ENCODE measurements at regions of chr20 and their contacts with region 1.

Region 1: DNA sequence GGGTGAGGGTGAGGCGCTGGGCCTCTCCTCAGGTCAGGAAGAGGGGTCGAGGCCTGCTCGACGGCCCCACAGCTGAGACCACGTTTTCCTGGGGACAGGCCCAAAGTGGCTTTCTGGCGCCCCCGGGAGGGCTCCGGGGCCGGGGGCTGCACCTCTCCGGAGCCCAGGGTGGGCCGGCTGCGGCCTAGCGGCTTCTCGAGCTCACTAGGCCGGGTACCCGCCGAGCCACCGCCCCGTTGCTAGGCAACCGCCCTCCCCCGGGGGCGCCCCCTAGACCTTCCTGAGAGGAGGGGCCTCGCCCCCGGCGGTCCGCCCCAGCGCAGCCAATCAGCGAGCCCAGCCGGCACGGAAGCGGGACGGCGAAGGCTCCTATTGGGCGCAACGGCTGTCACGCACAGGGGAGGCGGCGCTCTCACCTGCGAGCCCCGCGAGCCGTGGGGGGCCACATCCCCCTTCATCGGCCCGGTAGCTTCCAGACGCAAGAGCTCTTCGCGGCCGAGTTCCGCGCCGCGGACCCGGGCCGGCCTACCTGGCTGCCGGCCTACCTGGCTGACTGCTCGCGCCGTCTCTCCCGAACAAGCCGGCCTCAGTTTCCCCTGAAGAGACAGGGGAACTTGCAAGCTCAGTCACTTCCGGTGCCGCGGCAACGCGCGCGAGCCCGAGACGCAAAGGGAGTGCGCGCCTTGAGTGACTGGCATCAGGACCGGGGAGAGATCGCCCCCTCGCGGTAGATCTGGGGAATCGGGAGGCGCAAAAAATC is 831 bp upstream of the BCL2L1 start:
- H3K4me3 Mint-ChIP-seq: peak overlapping the region; percentile 93
- H3K27ac Mint-ChIP-seq: peak overlapping the region; percentile 97
- H3K4me1 Mint-ChIP-seq: peaks cover 47% of the 10 kb centered on the region
- H3K27me3 Mint-ChIP-seq: no peaks in the 10 kb centered on the region

Region 2: DNA sequence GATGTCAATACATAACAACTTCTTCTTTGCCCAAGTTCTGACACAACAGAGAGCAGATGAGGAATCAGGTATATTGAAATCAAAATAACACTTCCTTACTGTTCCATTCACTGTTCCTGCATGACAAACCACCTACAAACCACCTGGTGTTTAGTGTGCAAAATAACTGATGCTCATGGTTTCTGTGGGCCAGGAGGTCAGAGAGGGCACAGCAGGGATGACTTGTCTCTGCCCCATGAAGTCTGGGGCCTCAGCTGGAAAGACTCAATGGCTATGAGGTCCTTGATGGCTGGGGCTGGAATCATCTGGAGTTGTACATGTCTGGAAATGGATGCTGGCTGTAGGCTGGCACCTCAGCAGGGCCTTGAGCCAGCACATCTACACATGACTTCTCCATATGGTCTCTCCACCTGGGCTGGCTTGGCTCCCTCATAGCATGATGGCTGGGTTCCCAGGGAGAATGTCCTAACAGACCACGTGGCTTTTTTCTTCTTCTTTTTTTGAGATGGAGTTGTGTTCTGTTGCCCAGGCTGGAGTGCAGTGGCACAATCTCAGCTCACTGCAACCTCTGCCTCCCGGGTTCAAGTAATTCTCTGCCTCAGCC is 93.2 kb before region 1 on chr20:
- intact Hi-C with region 1: loop called (anchors 1 kb)
- H3K4me3 Mint-ChIP-seq: no peak overlapping the region
- H3K27ac Mint-ChIP-seq: no peak overlapping the region
- H3K4me1 Mint-ChIP-seq: no peaks in the 10 kb centered on the region
- H3K27me3 Mint-ChIP-seq: no peaks in the 10 kb centered on the region

Region 3: GRCh38 chr20:31661625-31662371 is 61.7 kb before region 1 on chr20:
- intact Hi-C with region 1: loop called (anchors 1 kb)
- H3K4me3 Mint-ChIP-seq: peak overlapping the region; percentile 74
- H3K27ac Mint-ChIP-seq: peak overlapping the region; percentile 65
- H3K4me1 Mint-ChIP-seq: peaks cover 40% of the 10 kb centered on the region
- H3K27me3 Mint-ChIP-seq: peaks cover 1% of the 10 kb centered on the region

Region 4: GRCh38 chr20:31674895-31675827 is 48.3 kb before region 1 on chr20:
- intact Hi-C with region 1: loop called (anchors 1 kb)
- H3K4me3 Mint-ChIP-seq: peak overlapping the region; percentile 72
- H3K27ac Mint-ChIP-seq: peak overlapping the region; percentile 93
- H3K4me1 Mint-ChIP-seq: peaks cover 75% of the 10 kb centered on the region
- H3K27me3 Mint-ChIP-seq: no peaks in the 10 kb centered on the region

Region 5: DNA sequence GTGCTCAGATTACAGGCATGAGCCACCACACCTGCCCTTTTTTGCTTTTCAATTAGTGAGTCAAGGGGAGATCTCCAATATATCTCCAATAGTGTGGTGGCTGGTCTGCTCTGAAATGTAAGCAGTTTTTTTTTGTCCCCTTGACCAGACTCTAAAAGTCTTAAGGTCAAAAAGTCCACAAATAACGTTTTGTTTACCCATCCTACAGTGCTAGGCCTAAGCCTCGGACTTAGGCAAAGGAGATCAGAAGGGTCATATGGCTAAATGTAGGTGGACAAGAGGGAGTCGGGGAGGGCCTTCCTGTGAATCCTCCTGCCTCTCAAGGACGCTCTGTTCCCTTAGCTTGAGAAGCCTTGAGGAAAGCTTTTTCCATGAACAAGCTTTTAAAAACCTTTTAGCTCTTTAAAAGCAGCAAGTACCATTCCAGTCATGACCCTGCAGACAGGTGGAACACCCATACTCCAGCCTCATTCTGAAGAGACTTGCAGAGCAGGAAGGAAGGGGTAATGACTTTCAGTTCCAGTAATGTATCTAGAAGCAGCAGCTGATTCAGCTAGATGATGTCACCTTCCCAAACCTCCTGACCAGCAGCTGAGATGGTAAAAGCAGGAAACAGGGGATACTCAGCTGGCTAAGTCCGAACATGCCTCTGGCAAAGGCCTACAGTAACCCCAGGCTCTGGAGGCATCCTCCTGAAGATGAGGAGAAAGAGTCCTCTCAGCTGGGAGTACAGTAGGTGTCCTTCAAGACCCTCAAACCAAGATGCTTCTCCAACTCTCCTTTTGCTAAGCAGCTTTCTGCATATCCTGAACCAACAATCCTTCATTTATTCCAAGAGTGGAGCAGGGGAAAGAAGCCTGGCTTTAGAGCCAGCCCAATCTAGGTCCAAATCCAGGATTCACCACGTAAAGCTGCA is 24.4 kb before region 1 on chr20:
- intact Hi-C with region 1: loop called (anchors 1 kb)
- H3K4me3 Mint-ChIP-seq: peak overlapping the region; percentile 39
- H3K27ac Mint-ChIP-seq: peak overlapping the region; percentile 83
- H3K4me1 Mint-ChIP-seq: peaks cover 72% of the 10 kb centered on the region
- H3K27me3 Mint-ChIP-seq: no peaks in the 10 kb centered on the region

Region 6: GRCh38 chr20:31738729-31739561 is 15.4 kb after region 1 on chr20 and contains the start of gene TPX2:
- intact Hi-C with region 1: loop called (anchors 2 kb)
- H3K4me3 Mint-ChIP-seq: peak within 1 kb of the TSS; percentile 59
- H3K27ac Mint-ChIP-seq: no peak within 1 kb of the TSS
- H3K4me1 Mint-ChIP-seq: no peaks in the 10 kb centered on the region
- H3K27me3 Mint-ChIP-seq: no peaks in the 10 kb centered on the region

Region 7: DNA sequence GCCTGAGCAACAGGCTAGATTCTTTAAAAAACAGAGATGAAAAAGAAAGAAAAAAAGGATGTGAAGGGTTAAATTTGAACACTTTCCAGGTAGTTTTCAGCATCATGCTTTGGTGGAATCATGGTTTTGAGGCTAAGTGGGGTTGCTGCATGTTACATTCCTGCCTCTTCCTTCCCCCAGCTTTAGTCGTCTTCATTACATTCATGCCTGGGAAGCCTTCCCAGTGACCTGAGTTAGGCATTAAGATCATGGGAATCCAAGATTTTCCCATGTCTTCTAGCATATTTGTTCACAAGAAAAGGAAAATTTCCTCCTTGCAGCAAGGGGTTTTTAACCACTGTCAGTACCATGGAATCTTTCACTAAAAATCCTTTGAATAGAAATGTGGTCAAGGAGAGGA is 27.6 kb after region 1 on chr20:
- intact Hi-C with region 1: no loop called
- H3K4me3 Mint-ChIP-seq: no peak overlapping the region
- H3K27ac Mint-ChIP-seq: peak overlapping the region; percentile 60
- H3K4me1 Mint-ChIP-seq: peaks cover 6% of the 10 kb centered on the region
- H3K27me3 Mint-ChIP-seq: no peaks in the 10 kb centered on the region

Measured in dendritic cell treated with granulocyte-macrophage colony-stimulating factor and Interleukin-4, amounts not matched to agents 40 ng/mL and 50 ng/mL, for 4 days (primary cell).